Panc1 (cell line): ENCODE measurements at regions of chr6 and their contacts with region 1.

Region 1: GRCh38 chr6:46221222-46221793 is 50.5 kb upstream of the ENPP5 start:
- DNase-seq: peak; percentile 33
- ATAC-seq: peak; percentile 80; the same call in 1 of the 2 replicates
- H3K4me3 ChIP-seq: no peak overlapping the region
- H3K27ac ChIP-seq: no peak overlapping the region
- H3K4me1 ChIP-seq: no peaks in the 10 kb centered on the region
- H3K27me3 ChIP-seq: 0 out of 2 replicates have a peak, but pooled peaks cover 2% of the 10 kb centered on the region
- CTCF ChIP-seq: peak; percentile 75; the same call in 1 of the 2 replicates

Region 2: DNA sequence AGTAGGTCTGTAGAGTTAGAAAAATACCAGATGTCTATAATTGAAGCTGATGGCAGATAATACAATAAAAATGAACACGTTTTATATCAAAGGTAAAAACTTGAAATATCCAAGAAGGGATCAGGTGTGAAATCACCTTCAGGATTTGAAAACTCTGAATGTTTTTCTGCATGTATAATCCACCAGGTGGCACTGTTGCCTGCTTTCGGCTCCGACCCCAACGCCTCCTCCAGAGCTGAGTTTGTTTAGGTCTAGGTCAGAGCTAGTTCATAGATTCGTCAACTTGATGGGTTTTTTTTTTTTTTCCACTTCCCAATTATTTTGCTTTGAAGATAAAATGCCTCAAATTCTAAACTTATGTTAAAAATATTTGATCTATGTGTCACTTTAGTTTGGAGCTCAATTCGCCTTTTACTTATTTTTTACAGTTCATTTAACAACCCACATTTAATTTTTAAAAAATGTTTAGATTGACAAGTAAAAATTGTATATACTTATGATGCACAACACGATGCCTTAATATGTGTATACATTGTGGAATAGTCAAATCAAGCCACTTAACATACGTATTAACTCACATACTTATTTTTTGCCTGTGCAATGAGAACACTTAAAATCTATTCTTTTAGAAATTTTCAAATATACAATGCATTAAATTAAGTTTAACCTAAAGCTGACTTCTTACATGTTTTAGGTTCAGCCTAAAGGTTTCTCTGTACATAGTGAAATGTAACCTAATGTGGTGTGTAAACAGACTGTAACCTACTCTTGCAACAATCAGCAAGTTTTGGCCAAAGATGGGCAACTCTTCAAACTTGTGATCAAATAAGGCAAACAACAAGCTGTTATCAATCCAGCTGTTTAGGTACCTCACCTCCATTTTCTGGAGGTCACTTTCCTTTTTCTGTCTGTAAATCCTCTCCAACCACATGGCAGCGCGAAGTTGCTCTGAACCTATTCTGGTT is 130.9 kb before region 1 on chr6:
- CTCF ChIA-PET with region 1: no interaction called
- POLR2A ChIA-PET with region 1: no interaction called
- in situ Hi-C with region 1: no loop called
- intact Hi-C with region 1: loop called (anchors 5 kb)
- DNase-seq: peak; percentile 22
- ATAC-seq: no peak; the same call in 1 of the 2 replicates
- H3K4me3 ChIP-seq: no peak overlapping the region
- H3K27ac ChIP-seq: no peak overlapping the region
- H3K4me1 ChIP-seq: no peaks in the 10 kb centered on the region
- H3K27me3 ChIP-seq: no peaks in the 10 kb centered on the region; the same call in 1 of the 2 replicates
- CTCF ChIP-seq: peak; percentile 84

Region 3: DNA sequence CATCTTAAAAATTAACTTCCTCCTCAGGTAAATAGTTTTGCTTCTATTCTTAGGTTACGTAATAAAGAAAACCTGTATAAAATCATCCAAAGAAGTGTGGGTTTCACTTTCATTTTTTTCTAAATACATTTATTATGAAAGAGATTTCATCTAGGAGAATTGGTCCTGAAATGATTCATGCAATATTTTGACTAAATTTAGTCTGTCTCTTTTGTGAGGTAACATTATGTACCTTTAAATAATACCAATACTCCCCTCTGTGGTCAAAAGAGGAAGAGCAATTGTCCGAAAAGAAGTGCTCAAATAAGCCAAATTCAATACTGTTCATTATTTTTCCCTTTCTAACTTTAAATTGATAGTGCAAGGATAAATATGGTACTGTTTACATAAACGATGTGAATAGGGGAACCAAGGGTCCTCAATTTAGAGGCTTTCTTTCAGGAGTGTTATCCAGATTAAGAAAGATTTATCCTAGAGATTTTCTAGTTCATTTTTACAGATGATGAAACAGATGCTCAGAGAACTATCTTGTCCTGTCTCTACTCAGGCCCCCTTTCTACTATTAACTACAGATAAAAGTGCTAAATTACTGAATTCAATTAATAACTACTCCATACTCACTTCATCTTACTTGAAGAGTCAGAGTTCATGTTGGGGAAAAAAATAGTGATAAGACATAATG is 405.1 kb after region 1 on chr6:
- CTCF ChIA-PET with region 1: no interaction called
- POLR2A ChIA-PET with region 1: no interaction called
- in situ Hi-C with region 1: no loop called
- intact Hi-C with region 1: loop called (anchors 5 kb)
- DNase-seq: no peak
- ATAC-seq: no peak
- H3K4me3 ChIP-seq: no peak overlapping the region
- H3K27ac ChIP-seq: no peak overlapping the region
- H3K4me1 ChIP-seq: no peaks in the 10 kb centered on the region
- H3K27me3 ChIP-seq: no peaks in the 10 kb centered on the region
- CTCF ChIP-seq: peak; percentile 67; the same call in 1 of the 2 replicates